ENCODE measurements at regions of chr17 and their contacts with region 1.

Region 1: GRCh38 chr17:21043286-21044232 is 748 bp upstream of the USP22 start:
- DNase-seq: peak; percentile 99
- H3K4me3 ChIP-seq: peak overlapping the region in 2 of 3 donors; percentile 28 to 61
- H3K27ac ChIP-seq: peak overlapping the region; percentile 93 to 99 (median 97)
- H3K4me1 ChIP-seq: peaks cover 16 to 33% of the 10 kb centered on the region in 2 donors
- H3K27me3 ChIP-seq: no peaks in the 10 kb centered on the region
- CTCF ChIP-seq: peak; percentile 66 to 93 (median 82)
- POLR2A ChIP-seq: peak in 1 of 2 donors; percentile 61

Region 2: GRCh38 chr17:21214015-21214776 is 170.6 kb after region 1 on chr17 and contains the start of gene TMEM11:
- intact Hi-C with region 1: loop called (anchors 5 kb)
- DNase-seq: peak; percentile 97 to 98
- H3K4me3 ChIP-seq: peak within 1 kb of the TSS; percentile 67 to 97 (median 86)
- H3K27ac ChIP-seq: peak within 1 kb of the TSS; percentile 77 to 96 (median 90)
- H3K4me1 ChIP-seq: peaks cover 47 to 53% of the 10 kb centered on the region in 2 donors
- H3K27me3 ChIP-seq: no peaks in the 10 kb centered on the region
- CTCF ChIP-seq: peak in 2 of 6 experiments; percentile 2 to 25
- POLR2A ChIP-seq: peak in 1 of 2 donors; percentile 82
- total RNA-seq, gene TMEM11: 20.7 to 35.7 (median 24.7) TPM

Measured in thyroid gland (tissue), 4 donors.